Activated CD4-positive, alpha-beta T cell treated with anti-CD3 and anti-CD28 coated beads for 36 hours (primary cell): ENCODE measurements at regions of chr12 and their contacts with region 1.

Region 1: GRCh38 chr12:109093022-109093918 is at the start of gene ALKBH2:
- DNase-seq: peak; percentile 97
- ATAC-seq: peak; percentile 74
- H3K4me3 Mint-ChIP-seq: peak within 1 kb of the TSS; percentile 86
- H3K27ac Mint-ChIP-seq: peak within 1 kb of the TSS; percentile 90
- H3K4me1 Mint-ChIP-seq: peaks cover 30% of the 10 kb centered on the region
- H3K27me3 Mint-ChIP-seq: no peaks in the 10 kb centered on the region
- total RNA-seq, gene ALKBH2: 32.1 to 33.3 TPM

Region 2: GRCh38 chr12:108514973-108515814 is 578.1 kb before region 1 on chr12 and contains the start of gene FICD:
- CTCF ChIA-PET with region 1: no interaction called
- POLR2A ChIA-PET with region 1: no interaction called
- intact Hi-C with region 1: loop called in 1 of 2 experiments (anchors 1 kb)
- DNase-seq: peak; percentile 100
- ATAC-seq: peak; percentile 93
- H3K4me3 Mint-ChIP-seq: peak within 1 kb of the TSS; percentile 82
- H3K27ac Mint-ChIP-seq: peak within 1 kb of the TSS; percentile 83
- H3K4me1 Mint-ChIP-seq: peaks cover 26% of the 10 kb centered on the region
- H3K27me3 Mint-ChIP-seq: no peaks in the 10 kb centered on the region
- total RNA-seq, gene FICD: 3.5 to 4.5 TPM

Region 3: DNA sequence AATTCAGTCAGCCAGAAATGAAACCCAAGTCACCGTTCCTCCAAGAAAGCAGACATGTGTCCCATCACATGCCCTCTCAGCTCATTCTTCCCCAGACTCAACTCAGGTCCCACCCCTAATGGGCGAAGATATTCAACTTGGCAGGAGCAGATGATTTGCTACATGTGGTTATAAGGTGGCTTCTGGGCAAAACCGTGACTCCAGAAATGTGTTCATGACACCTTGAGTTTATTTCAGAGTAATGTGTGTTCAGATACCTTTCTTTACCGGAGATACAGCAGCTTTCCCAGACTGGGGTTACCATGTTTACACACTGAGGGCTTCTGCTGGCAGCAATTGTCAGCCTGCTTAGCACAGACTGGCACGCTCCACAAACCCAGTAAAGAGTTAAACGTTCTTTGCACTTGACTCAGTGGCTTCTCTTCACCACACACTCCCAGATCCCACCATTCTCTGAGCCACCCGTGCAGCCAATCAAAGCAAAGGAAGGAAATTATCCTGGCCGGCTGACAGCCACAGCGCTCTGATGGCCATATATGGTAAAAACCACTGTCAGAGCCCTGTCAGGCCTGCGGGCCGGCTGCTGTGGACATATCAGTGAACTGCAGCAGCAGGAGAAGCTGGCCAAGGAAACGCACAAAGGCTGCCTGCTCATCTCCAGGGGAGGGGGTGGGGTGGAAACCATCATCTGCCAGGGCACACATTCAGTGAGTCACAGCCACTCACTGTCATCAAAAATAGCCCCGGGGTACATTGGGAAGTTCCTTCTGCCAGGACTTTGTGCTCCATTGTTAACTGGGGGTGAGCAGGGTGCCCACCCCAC is 401.9 kb before region 1 on chr12:
- CTCF ChIA-PET with region 1: no interaction called
- POLR2A ChIA-PET with region 1: no interaction called
- intact Hi-C with region 1: loop called in 1 of 2 experiments (anchors 5 kb)
- DNase-seq: peak; percentile 92
- ATAC-seq: peak; percentile 63
- H3K4me3 Mint-ChIP-seq: peak overlapping the region; percentile 67
- H3K27ac Mint-ChIP-seq: peak overlapping the region; percentile 96
- H3K4me1 Mint-ChIP-seq: peaks cover 80% of the 10 kb centered on the region
- H3K27me3 Mint-ChIP-seq: no peaks in the 10 kb centered on the region

Region 4: DNA sequence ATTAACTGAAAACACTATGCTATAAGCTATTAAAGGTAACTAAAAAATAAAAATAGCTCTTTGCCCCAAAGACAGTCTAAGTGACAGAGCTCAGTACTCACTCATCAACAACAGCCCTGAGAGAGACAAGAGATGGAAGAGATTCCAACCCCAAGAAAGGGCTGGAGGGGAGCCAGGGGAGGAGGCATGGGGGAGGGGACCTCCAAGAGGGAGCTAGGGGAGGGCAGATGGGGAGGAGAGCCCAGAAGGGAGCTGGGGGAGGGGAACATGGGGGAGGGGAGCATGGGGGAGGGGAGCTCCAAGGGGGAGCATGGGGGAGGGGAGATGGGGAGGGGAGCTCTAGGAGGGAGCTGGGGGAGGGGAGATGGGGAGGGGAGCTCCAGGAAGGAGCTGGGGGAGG is 243.6 kb before region 1 on chr12:
- CTCF ChIA-PET with region 1: no interaction called
- POLR2A ChIA-PET with region 1: no interaction called
- intact Hi-C with region 1: no loop called
- DNase-seq: no peak
- ATAC-seq: no peak
- H3K4me3 Mint-ChIP-seq: no peak overlapping the region
- H3K27ac Mint-ChIP-seq: peak overlapping the region; percentile 55
- H3K4me1 Mint-ChIP-seq: peaks cover 10% of the 10 kb centered on the region
- H3K27me3 Mint-ChIP-seq: no peaks in the 10 kb centered on the region

Region 5: GRCh38 chr12:108884116-108885012 is 208.9 kb before region 1 on chr12:
- CTCF ChIA-PET with region 1: interaction called, 13 read pairs
- POLR2A ChIA-PET with region 1: no interaction called
- intact Hi-C with region 1: loop called (anchors 1 kb)
- DNase-seq: peak; percentile 86
- ATAC-seq: peak; percentile 88
- H3K4me3 Mint-ChIP-seq: no peak overlapping the region
- H3K27ac Mint-ChIP-seq: no peak overlapping the region
- H3K4me1 Mint-ChIP-seq: no peaks in the 10 kb centered on the region
- H3K27me3 Mint-ChIP-seq: no peaks in the 10 kb centered on the region

Region 6: DNA sequence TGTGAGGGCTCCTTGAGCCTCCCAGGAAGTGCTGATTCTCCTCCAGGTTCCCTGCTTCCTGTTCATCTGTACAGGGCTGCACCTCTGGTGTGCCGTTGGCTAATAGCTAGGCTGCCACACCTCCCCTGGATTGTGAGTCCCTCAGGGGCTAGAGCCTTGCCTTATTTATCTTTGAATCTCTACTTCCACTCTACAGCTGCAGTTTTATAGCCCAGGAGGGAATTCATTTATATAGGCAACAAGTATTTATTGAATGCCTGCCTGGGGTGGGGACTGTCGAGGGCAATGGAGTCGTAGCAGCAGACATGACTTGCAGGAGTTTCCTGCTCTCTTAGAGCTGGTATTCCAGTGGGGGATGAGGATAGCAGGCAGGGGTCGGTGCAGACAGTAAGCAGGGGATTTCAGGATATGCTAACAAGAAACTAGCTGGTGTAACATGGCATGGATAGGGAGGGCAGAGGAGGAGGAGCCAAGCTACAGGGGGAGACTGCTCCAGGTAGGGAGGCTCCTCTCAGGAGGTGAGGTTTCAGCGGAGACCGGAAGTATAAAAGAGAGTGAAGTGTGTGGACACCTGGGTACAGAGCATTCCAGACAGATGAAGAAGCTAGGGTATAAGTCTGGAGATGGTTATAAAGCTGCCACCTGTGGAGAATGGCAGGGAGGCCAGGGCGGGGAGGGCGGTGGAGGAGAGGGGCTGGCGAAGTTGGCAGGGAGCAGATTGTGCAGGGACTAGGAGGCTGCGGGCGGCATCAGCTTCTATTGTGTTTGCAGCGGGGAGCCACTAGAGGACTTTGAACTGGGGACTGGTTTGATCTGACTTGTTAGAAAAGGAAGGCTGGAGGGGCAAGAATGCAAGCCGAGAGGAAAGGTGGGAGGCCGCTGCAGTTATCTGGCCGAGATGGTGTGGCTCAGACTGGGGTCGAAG is 23.7 kb before region 1 on chr12:
- CTCF ChIA-PET with region 1: interaction called, 12 read pairs
- POLR2A ChIA-PET with region 1: no interaction called
- intact Hi-C with region 1: no loop called
- DNase-seq: no peak
- ATAC-seq: no peak
- H3K4me3 Mint-ChIP-seq: no peak overlapping the region
- H3K27ac Mint-ChIP-seq: no peak overlapping the region
- H3K4me1 Mint-ChIP-seq: no peaks in the 10 kb centered on the region
- H3K27me3 Mint-ChIP-seq: no peaks in the 10 kb centered on the region

Region 7: DNA sequence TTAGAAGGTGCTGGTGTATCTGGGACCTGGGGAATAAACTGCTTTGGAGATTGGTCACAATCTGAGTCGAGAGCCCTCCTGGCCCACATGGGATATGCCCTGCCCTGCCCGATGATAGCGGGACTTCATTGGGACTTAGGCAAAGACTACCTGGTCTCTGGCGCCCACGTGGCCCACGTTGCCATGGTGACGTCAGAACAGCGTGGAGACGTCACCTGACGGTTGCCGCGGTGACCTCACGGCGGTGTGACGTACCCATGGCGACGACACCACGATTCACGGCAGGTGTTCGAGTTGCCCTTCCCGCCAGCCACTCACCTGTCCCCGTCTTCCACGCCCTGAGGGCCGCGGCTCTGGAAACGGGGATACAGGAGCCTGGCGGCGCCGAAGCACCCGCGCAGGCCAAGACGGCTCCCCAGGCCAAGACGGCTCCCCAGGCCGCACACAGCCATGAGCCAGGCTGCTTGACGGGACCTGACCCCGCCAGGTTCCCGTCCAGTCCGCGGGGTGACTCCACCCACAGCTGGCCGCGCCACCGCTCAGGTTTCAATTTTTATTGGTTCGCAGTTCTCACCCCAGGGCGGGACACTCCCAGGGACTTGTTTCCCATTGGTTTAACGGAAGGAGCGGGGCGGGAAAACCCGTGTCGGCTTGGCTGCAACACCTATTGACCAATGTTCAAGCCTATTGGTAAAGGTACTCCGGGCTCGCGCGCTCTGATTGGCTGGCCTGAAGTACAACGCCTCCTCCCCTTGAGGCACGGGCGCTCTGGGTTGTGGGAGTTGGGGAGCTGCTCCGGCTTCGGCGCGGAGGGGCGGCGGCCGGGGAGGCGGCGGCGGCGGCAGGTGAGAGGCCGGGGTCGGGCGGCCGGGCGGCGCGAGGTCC is 480.0 kb after region 1 on chr12 and contains the starts of genes MMAB and MVK:
- CTCF ChIA-PET with region 1: no interaction called
- POLR2A ChIA-PET with region 1: no interaction called
- intact Hi-C with region 1: loop called in 1 of 2 experiments (anchors 1 kb)
- DNase-seq: peak; percentile 99
- ATAC-seq: peak; percentile 97
- H3K4me3 Mint-ChIP-seq: peak within 1 kb of the TSS; percentile 90
- H3K27ac Mint-ChIP-seq: peak within 1 kb of the TSS; percentile 96
- H3K4me1 Mint-ChIP-seq: peaks cover 23% of the 10 kb centered on the region
- H3K27me3 Mint-ChIP-seq: no peaks in the 10 kb centered on the region
- total RNA-seq, gene MMAB: 37.7 to 44.3 TPM
- total RNA-seq, gene MVK: 17.8 to 18.7 TPM

Region 8: GRCh38 chr12:110718222-110718908 is 1625.1 kb after region 1 on chr12:
- CTCF ChIA-PET with region 1: no interaction called
- POLR2A ChIA-PET with region 1: no interaction called
- intact Hi-C with region 1: no loop called
- DNase-seq: no peak
- ATAC-seq: peak; percentile 30
- H3K4me3 Mint-ChIP-seq: no peak overlapping the region
- H3K27ac Mint-ChIP-seq: peak overlapping the region; percentile 40
- H3K4me1 Mint-ChIP-seq: peaks cover 24% of the 10 kb centered on the region
- H3K27me3 Mint-ChIP-seq: no peaks in the 10 kb centered on the region